ENCODE measurements at regions of chr7 and their contacts with region 1.

Region 1: GRCh38 chr7:119935418-119936025 is 337.5 kb upstream of the KCND2 start:
- DNase-seq: peak; percentile 15
- H3K4me3 ChIP-seq: no peak overlapping the region
- H3K27ac ChIP-seq: no peak overlapping the region
- H3K27me3 ChIP-seq: no peaks in the 10 kb centered on the region
- CTCF ChIP-seq: peak; percentile 49

Region 2: GRCh38 chr7:119868387-119868786 is 67.1 kb before region 1 on chr7:
- CTCF ChIA-PET with region 1: no interaction called
- POLR2A ChIA-PET with region 1: no interaction called
- DNase-seq: no peak
- H3K4me3 ChIP-seq: no peak overlapping the region
- H3K27ac ChIP-seq: no peak overlapping the region
- H3K27me3 ChIP-seq: no peaks in the 10 kb centered on the region
- CTCF ChIP-seq: no peak

Region 3: GRCh38 chr7:119945822-119946221 is 10.3 kb after region 1 on chr7:
- CTCF ChIA-PET with region 1: interaction called, 13 read pairs
- POLR2A ChIA-PET with region 1: no interaction called
- DNase-seq: no peak
- H3K4me3 ChIP-seq: no peak overlapping the region
- H3K27ac ChIP-seq: no peak overlapping the region
- H3K27me3 ChIP-seq: no peaks in the 10 kb centered on the region
- CTCF ChIP-seq: no peak

Region 4: DNA sequence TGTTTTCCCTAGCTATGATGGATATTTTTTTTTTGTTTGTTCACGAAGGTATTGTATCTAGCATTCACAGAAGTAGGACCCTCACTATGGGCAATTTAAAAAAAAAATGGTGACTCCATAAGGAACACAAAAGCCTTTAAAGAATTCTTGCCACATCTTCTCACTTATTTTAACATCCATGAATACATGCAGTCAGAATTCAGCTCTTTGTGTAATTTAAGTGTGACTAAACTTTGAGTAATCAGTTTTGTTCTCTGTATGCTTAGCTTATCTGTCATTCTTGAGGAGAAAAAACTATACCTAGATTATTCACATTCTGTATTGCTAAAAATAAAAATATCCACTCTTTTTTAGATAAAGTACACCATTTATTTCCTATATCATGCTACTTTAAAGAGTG is 24.3 kb after region 1 on chr7:
- CTCF ChIA-PET with region 1: interaction called, 10 read pairs
- POLR2A ChIA-PET with region 1: no interaction called
- DNase-seq: no peak
- H3K4me3 ChIP-seq: no peak overlapping the region
- H3K27ac ChIP-seq: no peak overlapping the region
- H3K27me3 ChIP-seq: no peaks in the 10 kb centered on the region
- CTCF ChIP-seq: no peak

Region 5: DNA sequence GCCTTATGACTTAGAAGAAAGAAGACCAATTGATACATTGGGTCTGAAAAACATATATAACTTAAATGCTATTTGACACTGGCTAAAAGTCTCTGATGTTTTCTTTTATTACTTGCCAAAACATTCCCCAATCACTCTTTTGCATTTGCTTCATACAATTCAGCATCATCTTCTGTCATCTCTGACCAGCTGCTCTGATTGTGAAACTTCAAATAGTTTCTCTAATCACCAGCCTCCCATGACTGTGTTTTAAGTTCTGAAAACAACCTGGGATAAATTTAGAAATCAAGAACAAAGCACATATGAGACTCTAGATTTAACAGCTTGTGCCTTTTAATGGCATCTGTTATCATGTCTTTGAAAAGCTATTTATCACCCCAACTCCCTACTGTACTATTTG is 129.0 kb after region 1 on chr7:
- CTCF ChIA-PET with region 1: interaction called, 10 read pairs
- POLR2A ChIA-PET with region 1: no interaction called
- DNase-seq: peak; percentile 60
- H3K4me3 ChIP-seq: no peak overlapping the region
- H3K27ac ChIP-seq: no peak overlapping the region
- H3K27me3 ChIP-seq: no peaks in the 10 kb centered on the region
- CTCF ChIP-seq: no peak

Region 6: DNA sequence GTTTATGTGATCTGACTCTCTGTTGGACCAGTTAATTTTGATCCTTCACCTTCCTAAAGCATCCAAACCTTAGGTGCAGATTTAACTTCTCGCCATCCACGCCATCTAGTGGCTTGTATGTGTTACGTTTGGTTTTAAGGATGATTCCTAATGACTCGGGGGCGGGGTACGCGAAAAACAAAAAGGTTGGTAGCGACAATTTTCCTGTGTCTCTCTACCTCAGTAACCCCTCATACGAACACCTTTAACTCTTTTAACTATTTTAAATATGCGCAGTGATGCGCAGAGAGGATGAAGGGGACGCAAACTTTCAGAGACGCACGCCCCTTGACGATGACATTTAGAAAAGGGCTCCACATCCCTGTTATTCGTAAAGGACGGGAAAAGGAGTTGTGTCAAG is 336.7 kb after region 1 on chr7:
- CTCF ChIA-PET with region 1: interaction called, 53 read pairs
- POLR2A ChIA-PET with region 1: no interaction called
- DNase-seq: peak; percentile 16
- H3K4me3 ChIP-seq: peak overlapping the region; percentile 61
- H3K27ac ChIP-seq: no peak overlapping the region
- H3K27me3 ChIP-seq: peaks cover 14% of the 10 kb centered on the region
- CTCF ChIP-seq: peak; percentile 79

Measured in AG04450 (cell line).